ENCODE measurements at regions of chr10 and their contacts with region 1.

Region 1: DNA sequence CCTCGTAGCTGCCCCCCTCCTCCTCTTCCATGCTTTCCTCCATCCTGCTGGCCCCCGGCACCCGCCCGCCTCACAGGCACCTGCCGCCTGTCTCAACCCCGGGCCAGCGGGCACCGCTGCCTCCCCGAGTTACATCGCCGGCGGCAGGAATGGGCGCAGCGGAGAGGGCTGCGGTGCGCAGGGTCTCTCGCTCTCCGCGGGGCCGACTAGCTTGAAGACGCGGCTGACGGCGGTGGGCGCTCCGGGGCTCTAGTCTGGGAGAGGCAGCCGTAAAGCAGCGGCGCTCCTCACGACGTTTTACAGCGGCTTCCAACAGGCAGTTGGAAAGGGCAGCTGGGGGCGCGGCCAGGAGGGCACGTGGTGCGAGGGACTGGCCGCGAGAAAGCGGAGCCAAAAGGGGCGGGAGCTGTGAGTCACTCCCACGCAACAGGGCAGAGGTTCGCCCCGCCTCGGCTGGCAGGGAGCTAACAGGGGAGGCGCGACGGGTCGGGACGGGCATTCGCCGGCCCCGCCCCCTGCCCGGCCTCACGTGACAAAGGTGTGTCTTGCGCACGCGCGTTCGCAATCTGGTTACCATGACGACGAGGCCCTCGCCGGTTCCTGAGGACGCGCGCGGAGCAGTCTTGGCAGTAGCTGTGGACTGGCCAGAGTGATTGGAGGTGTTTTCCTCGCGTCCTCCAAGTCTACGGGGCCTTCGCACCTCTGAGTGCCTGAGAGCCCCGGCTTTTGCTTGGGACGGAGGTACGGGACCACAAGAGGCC is at the start of gene CACUL1:
- DNase-seq: peak; percentile 98
- ATAC-seq: peak; percentile 96
- H3K4me3 ChIP-seq: peak within 1 kb of the TSS; percentile 98
- H3K27ac ChIP-seq: peak within 1 kb of the TSS; percentile 69
- H3K4me1 ChIP-seq: peaks cover 8% of the 10 kb centered on the region
- H3K27me3 ChIP-seq: no peaks in the 10 kb centered on the region
- CTCF ChIP-seq: no peak
- EP300 ChIP-seq: no peak; a peak in 1 of 4 replicates
- POLR2A ChIP-seq: peak; percentile 90
- RAD21 ChIP-seq: no peak
- polyA plus RNA-seq, gene CACUL1: 7.4 to 10.6 TPM

Region 2: GRCh38 chr10:118729641-118730258 is 25.1 kb before region 1 on chr10:
- CTCF ChIA-PET with region 1: interaction called, 5 read pairs
- POLR2A ChIA-PET with region 1: interaction called, 5 read pairs
- RAD21 ChIA-PET with region 1: interaction called, 16 read pairs
- SMC1A ChIA-PET with region 1: interaction called, 23 read pairs
- in situ Hi-C with region 1: no loop called
- intact Hi-C with region 1: no loop called
- DNase-seq: peak; percentile 45
- ATAC-seq: peak; percentile 81
- H3K4me3 ChIP-seq: no peak overlapping the region
- H3K27ac ChIP-seq: peak overlapping the region; percentile 32; the same call in 1 of the 2 replicates
- H3K4me1 ChIP-seq: peaks cover 23% of the 10 kb centered on the region
- H3K27me3 ChIP-seq: no peaks in the 10 kb centered on the region
- CTCF ChIP-seq: no peak
- EP300 ChIP-seq: peak in 1 of 2 experiments; percentile 21; a peak in 1 of 4 replicates
- POLR2A ChIP-seq: no peak
- RAD21 ChIP-seq: no peak

Measured in GM12878 (cell line).